Activated B cell treated with CpG ODN at 0.5 μM for 24 hours (primary cell): ENCODE measurements at regions of chr5 and their contacts with region 1.

Region 1: DNA sequence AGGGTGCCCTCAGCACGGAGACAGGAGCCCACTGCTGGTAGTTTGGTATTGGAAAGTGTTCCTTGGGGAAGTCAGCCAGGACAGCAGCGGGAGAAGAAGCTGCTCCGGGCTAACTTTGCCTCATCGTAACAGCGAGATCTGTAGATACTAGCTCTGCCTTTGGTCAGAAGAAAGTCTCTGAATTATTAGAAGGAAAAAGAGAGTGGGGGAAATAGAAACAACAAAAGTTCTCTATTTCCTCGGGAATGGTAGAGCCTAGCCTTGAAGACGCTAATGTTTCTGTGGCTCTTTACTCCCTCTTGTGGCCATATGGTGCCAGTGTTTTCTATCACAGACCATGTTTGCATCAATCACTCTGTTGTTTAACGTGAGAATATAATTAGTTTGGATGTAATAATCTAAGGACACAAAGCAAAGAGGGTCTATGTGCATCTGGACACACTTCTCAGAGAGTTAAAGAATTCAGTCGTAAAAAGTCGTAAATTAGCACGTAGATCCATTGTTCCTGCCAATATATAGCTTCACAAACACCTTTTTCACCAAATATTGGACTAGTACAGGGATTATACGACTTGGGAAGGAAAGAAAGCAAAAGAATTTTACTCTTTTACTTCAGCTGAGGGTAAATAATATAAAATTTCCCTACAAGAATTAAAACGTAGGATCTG is 40.2 kb upstream of the HSD17B4 start:
- DNase-seq: no peak
- ATAC-seq: peak; percentile 74
- H3K4me3 Mint-ChIP-seq: peak overlapping the region; percentile 90
- H3K27ac Mint-ChIP-seq: peak overlapping the region; percentile 89
- H3K4me1 Mint-ChIP-seq: peaks cover 81% of the 10 kb centered on the region
- H3K27me3 Mint-ChIP-seq: no peaks in the 10 kb centered on the region
- CTCF ChIP-seq: peak; percentile 98

Region 2: GRCh38 chr5:119022017-119022745 is 389.9 kb before region 1 on chr5:
- CTCF ChIA-PET with region 1: interaction called, 73 read pairs
- POLR2A ChIA-PET with region 1: interaction called, 6 read pairs
- intact Hi-C with region 1: loop called (anchors 1 kb)
- DNase-seq: no peak
- ATAC-seq: peak; percentile 62
- H3K4me3 Mint-ChIP-seq: peak overlapping the region; percentile 45
- H3K27ac Mint-ChIP-seq: peak overlapping the region; percentile 87
- H3K4me1 Mint-ChIP-seq: peaks cover 72% of the 10 kb centered on the region
- H3K27me3 Mint-ChIP-seq: no peaks in the 10 kb centered on the region
- CTCF ChIP-seq: no peak

Region 3: DNA sequence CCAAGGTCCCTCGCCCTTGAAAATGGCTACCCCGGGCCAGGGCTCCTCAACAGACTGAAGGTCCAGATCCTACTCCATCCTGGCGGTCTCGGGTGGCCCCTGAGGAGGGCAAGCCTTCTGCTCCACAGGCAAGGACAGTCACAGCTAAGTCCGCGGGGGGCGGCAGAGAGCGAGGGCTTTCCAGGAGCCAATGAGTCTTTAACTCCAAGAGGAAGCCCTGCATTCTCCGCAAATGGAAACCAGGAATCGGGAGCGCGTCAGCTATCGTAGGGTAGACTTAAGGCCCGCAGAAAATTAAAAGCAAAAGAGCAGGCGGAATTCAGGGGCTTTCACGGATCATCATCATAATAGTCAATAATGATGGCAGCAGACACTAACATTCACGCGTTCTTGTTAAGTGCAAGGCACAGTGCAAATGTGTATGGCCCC is 144.1 kb before region 1 on chr5:
- CTCF ChIA-PET with region 1: interaction called, 14 read pairs
- POLR2A ChIA-PET with region 1: interaction called, 16 read pairs
- intact Hi-C with region 1: loop called (anchors 1 kb)
- DNase-seq: peak; percentile 62
- ATAC-seq: peak; percentile 65
- H3K4me3 Mint-ChIP-seq: peak overlapping the region; percentile 95
- H3K27ac Mint-ChIP-seq: peak overlapping the region; percentile 95
- H3K4me1 Mint-ChIP-seq: peaks cover 50% of the 10 kb centered on the region
- H3K27me3 Mint-ChIP-seq: no peaks in the 10 kb centered on the region
- CTCF ChIP-seq: no peak

Region 4: DNA sequence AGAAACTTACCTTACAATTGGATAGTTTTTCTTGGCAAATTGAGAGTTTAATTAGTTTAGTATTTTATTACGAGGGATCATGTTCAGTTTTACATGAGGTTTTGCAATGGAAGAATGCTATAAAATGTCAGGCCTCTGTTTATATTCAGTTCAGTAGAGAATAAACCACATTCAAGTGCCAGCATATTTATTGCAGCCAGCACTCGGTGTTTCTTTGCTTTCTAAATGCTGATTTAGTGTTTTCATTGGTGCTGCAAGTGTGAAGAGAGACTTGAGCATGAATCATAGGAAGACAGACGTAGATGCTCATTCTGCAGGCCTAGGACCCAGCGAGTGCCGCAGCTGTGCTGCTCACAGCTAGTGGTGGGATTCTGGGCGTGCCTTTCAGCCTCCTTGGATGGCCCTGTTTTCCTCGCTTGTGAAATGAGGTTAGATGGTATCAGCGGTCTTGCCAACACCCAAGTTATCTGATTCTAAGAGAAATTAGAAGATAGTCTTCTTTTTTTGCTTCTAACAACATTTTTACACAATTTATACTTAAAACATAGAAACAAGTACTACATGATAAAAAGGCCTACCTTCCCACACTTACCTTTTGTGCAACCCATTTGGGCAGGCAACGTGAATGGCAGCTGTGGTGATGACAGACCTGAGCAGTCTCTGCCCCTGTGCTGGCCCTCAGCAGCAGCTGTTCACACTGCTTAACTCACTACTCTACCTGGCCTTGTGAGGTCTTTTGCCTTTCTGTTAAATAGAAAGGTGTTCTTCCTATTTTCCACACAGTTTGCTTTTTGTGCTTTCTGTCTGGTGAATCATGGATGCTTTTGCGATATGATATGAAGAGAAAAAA is 83.1 kb before region 1 on chr5:
- CTCF ChIA-PET with region 1: interaction called, 13 read pairs
- POLR2A ChIA-PET with region 1: interaction called, 3 read pairs
- intact Hi-C with region 1: loop called (anchors 1 kb)
- DNase-seq: no peak
- ATAC-seq: no peak
- H3K4me3 Mint-ChIP-seq: no peak overlapping the region
- H3K27ac Mint-ChIP-seq: peak overlapping the region; percentile 69
- H3K4me1 Mint-ChIP-seq: peaks cover 94% of the 10 kb centered on the region
- H3K27me3 Mint-ChIP-seq: no peaks in the 10 kb centered on the region
- CTCF ChIP-seq: no peak

Region 5: GRCh38 chr5:119367502-119368237 is 44.4 kb before region 1 on chr5:
- CTCF ChIA-PET with region 1: interaction called, 8 read pairs
- POLR2A ChIA-PET with region 1: interaction called, 5 read pairs
- intact Hi-C with region 1: loop called (anchors 2 kb)
- DNase-seq: no peak
- ATAC-seq: peak; percentile 68
- H3K4me3 Mint-ChIP-seq: peak overlapping the region; percentile 71
- H3K27ac Mint-ChIP-seq: peak overlapping the region; percentile 84
- H3K4me1 Mint-ChIP-seq: peaks cover 89% of the 10 kb centered on the region
- H3K27me3 Mint-ChIP-seq: no peaks in the 10 kb centered on the region
- CTCF ChIP-seq: no peak

Region 6: DNA sequence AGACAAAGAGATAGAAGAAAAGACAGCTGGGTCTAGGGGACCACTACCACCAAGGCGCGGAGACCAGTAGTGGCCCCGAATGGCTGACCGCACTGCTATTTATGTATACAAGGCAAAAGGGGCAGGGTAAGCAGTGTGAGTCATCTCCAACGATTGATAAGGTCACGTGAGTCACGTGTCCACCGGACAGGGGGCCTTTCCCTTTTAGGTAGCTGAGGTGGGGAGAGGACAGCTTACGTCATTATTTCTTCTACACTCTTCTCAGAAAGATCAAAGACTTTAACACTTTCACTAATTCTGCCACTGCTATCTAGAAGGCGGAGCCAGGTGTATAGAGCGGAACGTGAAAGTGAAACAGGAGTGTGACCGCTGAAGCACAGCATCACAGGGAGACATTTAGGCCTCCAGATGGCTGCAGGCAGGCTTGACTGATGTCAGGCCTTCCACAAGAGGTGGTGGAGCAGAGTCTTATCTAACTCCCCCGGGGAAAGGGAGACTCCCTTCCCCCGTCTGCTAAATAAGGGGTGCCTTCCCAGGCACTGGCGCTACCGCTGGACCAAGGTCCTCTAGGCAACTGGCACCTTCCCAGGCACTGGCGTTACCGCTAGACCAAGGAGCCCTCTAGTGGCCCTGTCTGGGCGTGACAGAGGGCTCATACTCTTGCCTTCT is 1045.9 kb after region 1 on chr5:
- CTCF ChIA-PET with region 1: no interaction called
- POLR2A ChIA-PET with region 1: no interaction called
- intact Hi-C with region 1: loop called (anchors 1 kb)
- DNase-seq: peak; percentile 61
- ATAC-seq: peak; percentile 85
- H3K4me3 Mint-ChIP-seq: peak overlapping the region; percentile 85
- H3K27ac Mint-ChIP-seq: peak overlapping the region; percentile 84
- H3K4me1 Mint-ChIP-seq: peaks cover 13% of the 10 kb centered on the region
- H3K27me3 Mint-ChIP-seq: peaks cover 5% of the 10 kb centered on the region
- CTCF ChIP-seq: no peak